Activated CD4-positive, alpha-beta T cell treated with anti-CD3 and anti-CD28 coated beads, Interleukin-2, amount 10 ng/mL, durations not matched to agents 24 days and 14 days (primary cell): ENCODE measurements at regions of chr3 and their contacts with region 1.

Region 1: DNA sequence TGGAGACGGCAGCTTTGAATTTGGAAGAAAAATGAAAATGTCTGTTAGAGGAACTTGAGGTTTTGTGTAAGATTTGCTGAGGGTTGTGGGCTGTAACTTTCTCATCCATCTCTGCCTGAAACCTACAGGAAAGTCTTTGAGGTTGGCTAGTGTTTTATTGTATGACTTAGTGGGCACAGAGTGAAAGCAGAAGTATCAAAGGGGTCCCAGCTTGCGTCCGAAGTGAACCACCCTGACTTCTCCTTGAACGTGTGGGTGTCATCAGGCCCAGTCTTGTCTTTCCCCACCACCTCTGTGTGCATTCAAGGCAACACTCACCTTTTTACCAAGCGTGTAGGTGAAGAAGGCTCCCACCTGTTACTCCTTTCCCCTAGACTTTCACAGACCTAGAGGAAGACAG is 682.1 kb upstream of the CFAP20DC start:
- DNase-seq: no peak
- H3K4me3 Mint-ChIP-seq: peak overlapping the region; percentile 25
- H3K27ac Mint-ChIP-seq: peak overlapping the region; percentile 7
- H3K4me1 Mint-ChIP-seq: peaks cover 37% of the 10 kb centered on the region
- H3K27me3 Mint-ChIP-seq: peaks cover 7% of the 10 kb centered on the region

Region 2: GRCh38 chr3:59688636-59689035 is 43.3 kb before region 1 on chr3:
- intact Hi-C with region 1: no loop called
- DNase-seq: no peak
- H3K4me3 Mint-ChIP-seq: no peak overlapping the region
- H3K27ac Mint-ChIP-seq: no peak overlapping the region
- H3K4me1 Mint-ChIP-seq: no peaks in the 10 kb centered on the region
- H3K27me3 Mint-ChIP-seq: no peaks in the 10 kb centered on the region

Region 3: GRCh38 chr3:59783468-59783988 is 51.6 kb after region 1 on chr3:
- intact Hi-C with region 1: loop called (anchors 5 kb)
- DNase-seq: peak; percentile 79
- H3K4me3 Mint-ChIP-seq: peak overlapping the region; percentile 39
- H3K27ac Mint-ChIP-seq: peak overlapping the region; percentile 76
- H3K4me1 Mint-ChIP-seq: peaks cover 31% of the 10 kb centered on the region
- H3K27me3 Mint-ChIP-seq: no peaks in the 10 kb centered on the region